ENCODE measurements at regions of chr1 and their contacts with region 1.

Region 1: DNA sequence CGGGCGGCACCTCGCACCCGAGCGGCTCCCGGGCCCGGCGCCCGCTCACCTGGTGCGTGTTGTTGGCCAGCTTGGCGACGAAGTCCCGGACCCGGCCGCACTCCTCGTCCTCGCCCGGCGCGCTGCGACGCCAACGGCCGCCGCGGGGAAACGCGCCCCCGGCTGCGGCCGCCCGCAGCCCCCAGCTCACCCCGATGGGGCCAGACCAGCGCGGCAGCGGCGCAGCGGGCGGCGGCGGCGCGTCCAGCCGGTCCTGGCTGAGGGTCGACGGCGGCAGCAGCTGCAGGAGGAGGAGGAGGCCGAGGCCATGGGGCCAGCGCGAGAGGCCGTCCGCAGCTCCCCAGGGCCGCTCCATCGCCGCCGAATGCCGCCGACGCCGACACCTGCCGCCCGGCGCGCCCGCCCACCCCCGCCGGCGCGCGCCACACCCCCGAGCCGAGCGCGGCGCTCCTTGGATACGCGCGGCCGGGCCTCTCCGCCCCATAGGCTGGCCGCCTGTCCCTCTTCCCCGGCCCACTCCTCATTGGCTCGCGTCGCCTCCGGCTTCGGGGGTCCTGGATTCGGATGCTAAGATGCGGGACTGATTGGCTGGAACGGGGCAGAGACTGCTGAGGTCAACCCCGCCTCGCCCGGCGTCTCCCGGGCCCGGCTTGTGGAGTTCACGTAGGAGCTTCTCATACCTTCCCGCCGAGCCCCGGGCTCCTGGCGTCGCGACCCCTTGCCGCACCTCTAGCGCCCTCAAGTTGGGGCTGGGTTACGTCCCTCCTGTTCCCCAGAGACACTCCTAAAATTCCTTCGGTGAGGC is at the start of gene SORT1:
- H3K4me3 ChIP-seq: peak within 1 kb of the TSS; percentile 67
- H3K27ac ChIP-seq: peak within 1 kb of the TSS; percentile 79; the same call in 1 of the 2 replicates
- H3K4me1 ChIP-seq: peaks cover 12% of the 10 kb centered on the region
- CTCF ChIP-seq: 0 out of 2 replicates have a peak, but pooled peaks have one; percentile 15

Region 2: DNA sequence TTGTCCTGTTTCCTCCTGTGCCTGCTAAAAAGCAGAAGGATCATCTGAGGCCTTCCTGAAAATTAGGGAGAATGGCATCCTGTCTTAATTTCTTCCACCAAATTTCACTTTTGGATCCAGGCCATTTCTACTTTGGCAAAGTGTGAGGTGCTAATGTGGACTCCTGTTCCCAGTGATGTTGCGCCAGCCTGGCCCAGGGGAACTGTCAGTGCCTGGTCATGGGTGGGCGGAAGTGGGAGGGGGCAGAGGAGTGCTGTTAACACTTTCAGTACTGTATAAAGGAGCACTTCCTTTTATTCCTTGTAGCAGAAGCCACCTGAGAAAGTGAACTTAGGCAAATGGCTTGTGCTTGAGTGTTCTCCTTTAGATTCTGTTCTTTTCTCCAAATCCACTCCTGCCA is 263.9 kb before region 1 on chr1:
- CTCF ChIA-PET with region 1: no interaction called
- POLR2A ChIA-PET with region 1: no interaction called
- H3K4me3 ChIP-seq: no peak overlapping the region
- H3K27ac ChIP-seq: no peak overlapping the region
- H3K4me1 ChIP-seq: no peaks in the 10 kb centered on the region
- CTCF ChIP-seq: no peak

Region 3: GRCh38 chr1:109239580-109240095 is 158.1 kb before region 1 on chr1:
- CTCF ChIA-PET with region 1: interaction called, 30 read pairs
- POLR2A ChIA-PET with region 1: interaction called, 15 read pairs
- H3K4me3 ChIP-seq: no peak overlapping the region
- H3K27ac ChIP-seq: 0 out of 2 replicates have a peak overlapping the region, but pooled peaks have one; percentile 1
- H3K4me1 ChIP-seq: no peaks in the 10 kb centered on the region
- CTCF ChIP-seq: peak; percentile 47; the same call in 1 of the 2 replicates

Region 4: GRCh38 chr1:109263597-109264398 is 133.9 kb before region 1 on chr1:
- CTCF ChIA-PET with region 1: interaction called, 42 read pairs
- POLR2A ChIA-PET with region 1: no interaction called
- H3K4me3 ChIP-seq: no peak overlapping the region
- H3K27ac ChIP-seq: no peak overlapping the region
- H3K4me1 ChIP-seq: no peaks in the 10 kb centered on the region
- CTCF ChIP-seq: peak; percentile 97

Region 5: DNA sequence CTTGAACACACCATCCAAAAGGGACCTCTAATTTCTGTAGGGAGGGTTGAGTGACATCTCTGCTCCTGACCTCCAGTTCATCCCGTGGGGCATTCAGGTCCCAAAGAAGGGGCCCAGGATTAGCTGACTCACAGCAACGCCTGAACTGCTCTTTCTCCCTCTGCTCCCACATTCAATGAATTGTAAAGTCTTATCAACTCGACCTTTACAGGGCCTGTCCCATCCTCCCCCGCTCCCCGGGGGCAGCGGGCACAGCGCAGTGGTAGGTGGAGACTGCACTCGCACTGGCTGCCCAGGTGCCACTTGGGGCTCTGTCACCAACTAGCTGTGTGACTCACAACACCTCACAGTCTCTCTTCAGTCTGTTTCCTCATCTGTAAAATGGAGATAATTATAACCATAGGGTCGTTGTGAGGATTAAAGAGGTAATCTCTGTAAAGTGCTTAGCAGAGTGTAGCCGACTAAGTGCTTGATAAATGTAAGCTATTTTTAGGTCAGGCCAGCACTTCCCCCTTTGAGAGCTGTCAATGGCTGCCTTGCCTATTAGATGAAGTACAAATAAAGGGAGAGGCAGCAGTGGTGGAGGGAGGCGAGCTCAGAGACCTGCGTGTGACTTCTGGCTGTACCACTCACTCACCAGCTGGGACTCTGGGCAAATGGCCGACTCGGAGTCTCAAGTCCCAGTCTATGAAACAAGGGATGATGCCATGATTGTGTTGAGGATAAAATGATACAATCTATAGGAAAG is 90.3 kb before region 1 on chr1:
- CTCF ChIA-PET with region 1: interaction called, 11 read pairs
- POLR2A ChIA-PET with region 1: interaction called, 4 read pairs
- H3K4me3 ChIP-seq: no peak overlapping the region
- H3K27ac ChIP-seq: no peak overlapping the region
- H3K4me1 ChIP-seq: 0 out of 2 replicates have a peak, but pooled peaks cover 2% of the 10 kb centered on the region
- CTCF ChIP-seq: no peak

Region 6: DNA sequence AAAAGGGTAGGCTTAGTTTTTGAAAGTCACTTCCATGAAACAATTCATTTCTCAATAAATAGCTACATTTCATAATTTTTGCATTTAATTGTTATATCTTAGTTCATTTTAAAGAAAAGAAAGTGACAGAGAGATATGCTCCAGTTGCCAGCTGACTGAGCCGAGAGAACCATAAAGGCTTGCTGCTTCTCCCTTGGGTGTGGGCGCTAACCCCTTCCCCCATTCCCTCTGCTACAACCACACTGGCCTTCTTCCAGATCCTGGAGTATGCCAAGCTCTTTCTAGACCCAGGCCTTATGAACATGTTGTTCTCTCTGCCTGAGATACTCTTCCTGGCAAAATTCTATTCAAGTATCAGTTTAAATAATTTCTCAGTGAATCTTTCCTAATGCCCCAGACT is 12.3 kb before region 1 on chr1:
- CTCF ChIA-PET with region 1: interaction called, 17 read pairs
- POLR2A ChIA-PET with region 1: interaction called, 7 read pairs
- H3K4me3 ChIP-seq: no peak overlapping the region
- H3K27ac ChIP-seq: no peak overlapping the region
- H3K4me1 ChIP-seq: peaks cover 2% of the 10 kb centered on the region
- CTCF ChIP-seq: no peak

Region 7: GRCh38 chr1:110155878-110156522 is 758.3 kb after region 1 on chr1:
- CTCF ChIA-PET with region 1: no interaction called
- POLR2A ChIA-PET with region 1: no interaction called
- H3K4me3 ChIP-seq: no peak overlapping the region
- H3K27ac ChIP-seq: no peak overlapping the region
- H3K4me1 ChIP-seq: no peaks in the 10 kb centered on the region
- CTCF ChIP-seq: no peak